ENCODE measurements at regions of chr4 and their contacts with region 1.

Region 1: GRCh38 chr4:2934813-2935761 is 28.1 kb downstream of the NOP14 start:
- DNase-seq: peak; percentile 90 to 99 (median 95)
- ATAC-seq: peak; percentile 81
- H3K4me3 ChIP-seq: peak overlapping the region; percentile 97
- H3K4me3 Mint-ChIP-seq: peak overlapping the region; percentile 76 to 91 (median 84)
- H3K27ac ChIP-seq: peak overlapping the region; percentile 92
- H3K27ac Mint-ChIP-seq: peak overlapping the region; percentile 67 to 91 (median 87)
- H3K4me1 ChIP-seq: peaks cover 38 to 46% of the 10 kb centered on the region in 2 donors
- H3K4me1 Mint-ChIP-seq: peaks cover 17 to 44% (median 37%) of the 10 kb centered on the region in 7 donors
- H3K27me3 ChIP-seq: no peaks in the 10 kb centered on the region
- H3K27me3 Mint-ChIP-seq: no peaks in the 10 kb centered on the region

Region 2: GRCh38 chr4:2755837-2756694 is 179.0 kb before region 1 on chr4 and contains the start of gene TNIP2:
- CTCF ChIA-PET with region 1: no interaction called
- POLR2A ChIA-PET with region 1: interaction called, 5 read pairs
- intact Hi-C with region 1: loop called (anchors 2 kb)
- DNase-seq: peak; percentile 65 to 85 (median 74)
- ATAC-seq: peak; percentile 90
- H3K4me3 ChIP-seq: peak within 1 kb of the TSS; percentile 64
- H3K4me3 Mint-ChIP-seq: peak within 1 kb of the TSS; percentile 75 to 93 (median 87)
- H3K27ac ChIP-seq: peak within 1 kb of the TSS; percentile 91
- H3K27ac Mint-ChIP-seq: peak within 1 kb of the TSS; percentile 54 to 94 (median 86)
- H3K4me1 ChIP-seq: peaks cover 9 to 12% of the 10 kb centered on the region in 2 donors
- H3K4me1 Mint-ChIP-seq: peaks cover 22 to 29% (median 26%) of the 10 kb centered on the region in 7 donors
- H3K27me3 ChIP-seq: no peaks in the 10 kb centered on the region
- H3K27me3 Mint-ChIP-seq: no peaks in the 10 kb centered on the region
- total RNA-seq, gene TNIP2: 39.4 to 56.0 (median 43.6) TPM

Region 3: GRCh38 chr4:2843263-2843940 is 91.7 kb before region 1 on chr4 and contains the start of gene ADD1:
- CTCF ChIA-PET with region 1: no interaction called
- POLR2A ChIA-PET with region 1: interaction called, 4 read pairs
- intact Hi-C with region 1: loop called (anchors 1 to 5 kb)
- DNase-seq: peak; percentile 84 to 100 (median 94)
- ATAC-seq: peak; percentile 98
- H3K4me3 ChIP-seq: peak within 1 kb of the TSS; percentile 80
- H3K4me3 Mint-ChIP-seq: peak within 1 kb of the TSS; percentile 87 to 100 (median 92)
- H3K27ac ChIP-seq: peak within 1 kb of the TSS; percentile 95
- H3K27ac Mint-ChIP-seq: peak within 1 kb of the TSS; percentile 85 to 97 (median 93)
- H3K4me1 ChIP-seq: peaks cover 33 to 40% of the 10 kb centered on the region in 2 donors
- H3K4me1 Mint-ChIP-seq: peaks cover 39 to 75% (median 59%) of the 10 kb centered on the region in 7 donors
- H3K27me3 ChIP-seq: no peaks in the 10 kb centered on the region
- H3K27me3 Mint-ChIP-seq: no peaks in the 10 kb centered on the region
- total RNA-seq, gene ADD1: 211 to 300 (median 282) TPM

Region 4: GRCh38 chr4:2954358-2955185 is 19.5 kb after region 1 on chr4:
- CTCF ChIA-PET with region 1: interaction called, 6 read pairs
- POLR2A ChIA-PET with region 1: interaction called, 6 read pairs
- intact Hi-C with region 1: loop called in 1 of 2 experiments (anchors 1 kb)
- DNase-seq: peak in 2 of 9 donors; percentile 47 to 82
- ATAC-seq: peak; percentile 76
- H3K4me3 ChIP-seq: no peak overlapping the region
- H3K4me3 Mint-ChIP-seq: peak overlapping the region in 5 of 10 donors; percentile 19 to 73 (median 31)
- H3K27ac ChIP-seq: peak overlapping the region; percentile 6
- H3K27ac Mint-ChIP-seq: peak overlapping the region; percentile 64 to 95 (median 88)
- H3K4me1 ChIP-seq: peaks cover 4% of the 10 kb centered on the region in 2 donors
- H3K4me1 Mint-ChIP-seq: peaks cover 7 to 54% (median 35%) of the 10 kb centered on the region in 7 donors
- H3K27me3 ChIP-seq: no peaks in the 10 kb centered on the region
- H3K27me3 Mint-ChIP-seq: no peaks in the 10 kb centered on the region

Region 5: DNA sequence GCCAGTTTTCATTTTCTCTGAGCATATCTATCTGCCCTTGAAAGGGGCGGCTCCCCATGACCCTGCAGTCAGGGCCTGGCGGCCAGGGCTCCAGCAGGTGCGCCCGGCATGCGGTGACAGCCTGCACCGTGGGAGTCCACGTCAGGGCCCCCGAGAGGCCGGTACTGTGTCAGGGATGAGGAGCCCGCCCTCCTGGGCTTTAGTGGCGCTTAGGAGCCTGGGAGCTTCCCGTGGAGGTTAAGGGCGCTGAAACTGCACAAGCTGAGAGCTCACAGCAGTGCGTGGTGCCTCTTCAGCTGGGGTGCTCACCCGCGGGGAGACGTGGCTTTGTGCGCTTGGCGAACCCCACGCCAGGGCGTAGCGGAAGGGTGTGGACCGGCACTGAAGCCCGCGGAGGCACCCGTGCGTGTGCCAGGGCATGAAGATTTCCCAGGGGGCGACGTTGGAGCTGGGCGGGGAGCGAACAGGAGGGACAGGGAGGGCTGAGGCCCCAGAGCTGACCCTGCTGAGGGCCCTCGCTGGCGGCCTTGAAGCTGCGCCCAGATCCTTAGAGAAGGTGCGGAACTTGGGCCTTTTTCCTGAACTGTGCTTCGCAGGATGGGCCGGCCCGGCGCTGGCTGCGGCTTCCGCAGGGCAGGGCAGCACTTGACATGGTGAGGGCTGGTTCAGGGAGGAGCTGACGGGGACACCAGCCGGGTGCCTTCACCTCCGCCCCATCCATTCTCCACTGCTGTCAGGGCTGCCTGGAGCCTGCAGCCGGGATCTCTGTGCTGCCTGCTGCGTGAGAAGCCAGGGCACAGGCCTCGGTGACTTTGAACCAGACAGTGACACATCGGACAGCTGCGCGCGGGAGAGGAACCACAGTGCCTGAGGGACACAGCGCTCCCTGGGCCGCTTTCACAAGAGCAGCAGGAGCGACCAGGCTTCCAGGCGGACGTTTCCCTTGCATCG is 106.4 kb after region 1 on chr4:
- CTCF ChIA-PET with region 1: interaction called, 5 read pairs
- POLR2A ChIA-PET with region 1: interaction called, 3 read pairs
- intact Hi-C with region 1: loop called in 1 of 2 experiments (anchors 1 kb)
- DNase-seq: peak in 8 of 9 donors; percentile 30 to 40 (median 36)
- ATAC-seq: peak; percentile 55
- H3K4me3 ChIP-seq: peak overlapping the region; percentile 66
- H3K4me3 Mint-ChIP-seq: peak overlapping the region; percentile 83 to 98 (median 89)
- H3K27ac ChIP-seq: peak overlapping the region; percentile 54
- H3K27ac Mint-ChIP-seq: peak overlapping the region in 8 of 9 donors; percentile 43 to 88 (median 84)
- H3K4me1 ChIP-seq: peaks cover 38 to 39% of the 10 kb centered on the region in 2 donors
- H3K4me1 Mint-ChIP-seq: peaks cover 40 to 72% (median 59%) of the 10 kb centered on the region in 7 donors
- H3K27me3 ChIP-seq: no peaks in the 10 kb centered on the region
- H3K27me3 Mint-ChIP-seq: peaks cover 0 to 6% (median 0%) of the 10 kb centered on the region in 5 donors